Ovary (tissue), 10 donors: ENCODE measurements at regions of chr11 and their contacts with region 1.

Region 1: DNA sequence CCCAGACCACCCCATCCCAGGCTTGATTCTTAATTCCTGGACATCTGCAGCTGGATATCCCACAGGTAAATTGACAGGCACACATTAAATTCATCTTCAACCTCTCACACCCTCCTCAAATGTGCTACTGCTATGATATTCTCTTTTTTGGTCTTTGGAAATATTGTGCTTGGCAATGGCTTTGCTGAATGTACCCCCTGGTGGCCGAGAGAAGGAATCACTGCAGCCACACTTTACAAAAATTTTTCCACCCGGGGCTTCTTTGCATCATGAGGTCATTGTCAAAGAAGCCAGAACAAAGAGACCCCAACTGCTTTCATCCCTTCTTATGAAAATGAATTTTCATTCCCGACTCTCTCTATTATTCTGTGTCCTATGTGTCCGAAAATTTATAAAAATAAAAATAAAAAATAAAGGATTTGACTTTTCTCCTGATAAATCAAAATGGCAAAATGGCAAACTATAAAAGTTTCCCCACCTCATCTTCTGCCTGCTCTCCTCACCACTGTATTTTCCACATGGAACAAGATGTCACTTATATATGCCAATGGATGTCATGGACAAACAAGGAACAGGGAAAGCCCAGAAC is 15.0 kb upstream of the CYB5R2 start:
- DNase-seq: peak in 1 of 5 donors; percentile 25
- H3K4me3 ChIP-seq: no peak overlapping the region
- H3K27ac ChIP-seq: no peak overlapping the region
- H3K4me1 ChIP-seq: no peaks in the 10 kb centered on the region
- H3K27me3 ChIP-seq: no peaks in the 10 kb centered on the region
- CTCF ChIP-seq: peak in 2 of 3 donors; percentile 48 to 73
- EP300 ChIP-seq: no peak
- POLR2A ChIP-seq: no peak

Region 2: GRCh38 chr11:7098235-7098832 is 590.0 kb before region 1 on chr11:
- intact Hi-C with region 1: loop called in 1 of 4 experiments (anchors 5 kb)
- DNase-seq: no peak
- H3K4me3 ChIP-seq: no peak overlapping the region
- H3K27ac ChIP-seq: no peak overlapping the region
- H3K4me1 ChIP-seq: no peaks in the 10 kb centered on the region
- H3K27me3 ChIP-seq: no peaks in the 10 kb centered on the region
- CTCF ChIP-seq: peak in 2 of 3 donors; percentile 51 to 53
- EP300 ChIP-seq: no peak
- POLR2A ChIP-seq: no peak

Region 3: DNA sequence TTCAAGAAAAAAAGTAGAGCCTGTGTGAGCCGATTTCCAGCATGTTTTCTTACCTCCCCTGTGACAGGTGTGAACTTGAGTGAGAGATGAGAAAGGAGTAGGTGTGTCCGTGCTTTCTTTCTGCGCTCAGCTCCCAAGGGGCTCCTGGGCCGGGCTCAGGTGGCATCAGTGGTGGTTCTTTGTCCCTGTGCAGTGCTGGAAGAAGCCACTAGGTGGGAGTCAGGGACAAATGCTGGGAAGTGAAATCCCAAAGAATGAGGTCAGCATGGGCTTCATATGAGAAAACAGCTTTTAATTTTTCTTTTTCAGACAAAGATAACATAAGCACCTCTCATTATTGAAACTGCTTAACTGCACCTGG is 116.7 kb before region 1 on chr11:
- intact Hi-C with region 1: loop called in 3 of 4 experiments (anchors 2 to 10 kb)
- DNase-seq: peak; percentile 68 to 83 (median 81)
- H3K4me3 ChIP-seq: no peak overlapping the region
- H3K27ac ChIP-seq: no peak overlapping the region
- H3K4me1 ChIP-seq: peaks cover 17% of the 10 kb centered on the region
- H3K27me3 ChIP-seq: no peaks in the 10 kb centered on the region
- CTCF ChIP-seq: peak; percentile 93 to 96 (median 94)
- EP300 ChIP-seq: no peak
- POLR2A ChIP-seq: no peak